ENCODE measurements at regions of chr6 and their contacts with region 1.

Region 1: DNA sequence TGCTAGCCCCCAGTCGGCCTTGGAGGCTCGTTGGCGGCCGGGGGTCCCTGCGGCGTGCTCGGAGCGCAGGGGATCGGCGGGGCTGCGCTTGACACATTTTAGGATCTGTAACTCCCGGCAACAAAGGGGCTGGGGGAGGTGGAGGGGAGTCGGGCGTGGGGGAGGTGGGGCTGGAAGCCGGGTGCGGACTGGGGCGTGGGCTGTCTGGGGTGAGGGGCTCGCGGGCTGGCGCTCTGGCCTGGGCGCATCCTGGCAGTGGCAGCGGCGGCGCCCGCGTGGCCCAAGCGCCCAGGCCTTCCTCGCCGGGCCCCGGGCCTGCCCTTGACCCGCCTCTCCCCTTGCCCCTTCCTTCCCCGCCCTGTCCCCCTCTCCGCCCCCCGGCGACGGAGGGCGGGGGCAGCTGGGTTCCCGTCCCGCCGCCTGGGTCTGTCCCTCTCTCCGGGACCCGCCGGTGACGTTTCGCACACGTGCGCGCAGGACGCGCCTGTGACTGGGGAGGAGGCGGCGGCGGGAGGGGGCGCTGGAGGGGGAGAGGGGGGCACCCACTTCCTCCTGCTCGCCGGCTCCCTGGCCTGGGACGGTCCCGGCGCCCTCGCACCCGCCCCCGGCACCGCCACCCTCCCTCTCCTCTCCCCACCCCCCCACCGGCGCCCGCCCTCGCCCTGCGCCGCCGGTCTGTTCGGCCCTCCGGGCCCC is 1.5 kb downstream of the E2F3 start:
- DNase-seq: peak; percentile 84
- CTCF ChIP-seq: no peak

Region 2: DNA sequence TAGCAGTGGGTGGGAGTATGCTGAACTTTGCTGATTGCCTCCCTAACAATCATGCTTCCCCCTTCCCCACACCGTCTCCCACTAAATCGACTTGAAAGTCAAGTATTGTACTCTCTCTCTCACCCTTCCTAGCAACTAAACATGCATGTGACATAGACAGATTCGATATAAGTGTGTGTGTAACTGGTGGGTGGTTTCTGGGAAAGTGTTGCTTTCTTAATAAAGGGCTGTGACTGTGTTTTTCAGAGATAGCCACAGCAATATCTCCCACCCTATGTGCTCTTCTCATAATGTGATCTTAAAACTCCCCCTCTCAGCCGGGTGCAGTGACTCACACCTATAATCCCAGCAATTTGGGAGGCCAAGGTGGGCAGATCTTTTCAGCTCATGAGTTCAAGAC is 50.9 kb before region 1 on chr6:
- CTCF ChIA-PET with region 1: no interaction called
- POLR2A ChIA-PET with region 1: no interaction called
- DNase-seq: no peak
- CTCF ChIP-seq: no peak

Region 3: DNA sequence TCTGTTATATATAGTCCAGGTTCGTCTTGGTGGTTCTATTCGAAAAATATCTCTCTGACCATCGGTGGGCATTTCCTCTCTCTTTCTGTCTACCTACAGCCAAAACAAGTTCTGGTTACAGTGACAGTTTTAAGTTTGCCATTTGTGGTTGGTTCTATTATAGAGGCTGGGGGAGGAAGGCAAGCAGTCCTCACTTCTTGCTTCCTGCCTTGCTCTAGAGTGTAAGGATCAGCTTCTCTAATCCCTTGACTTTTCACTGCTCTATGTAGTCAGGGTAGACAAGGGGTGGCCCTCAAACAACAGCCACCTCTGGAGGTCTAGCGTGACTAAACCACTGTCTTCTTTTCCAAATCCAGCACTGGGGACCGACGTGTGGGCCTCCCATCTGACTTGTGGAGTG is 14.6 kb after region 1 on chr6:
- CTCF ChIA-PET with region 1: interaction called, 58 read pairs
- POLR2A ChIA-PET with region 1: no interaction called
- DNase-seq: peak; percentile 21
- CTCF ChIP-seq: no peak

Region 4: DNA sequence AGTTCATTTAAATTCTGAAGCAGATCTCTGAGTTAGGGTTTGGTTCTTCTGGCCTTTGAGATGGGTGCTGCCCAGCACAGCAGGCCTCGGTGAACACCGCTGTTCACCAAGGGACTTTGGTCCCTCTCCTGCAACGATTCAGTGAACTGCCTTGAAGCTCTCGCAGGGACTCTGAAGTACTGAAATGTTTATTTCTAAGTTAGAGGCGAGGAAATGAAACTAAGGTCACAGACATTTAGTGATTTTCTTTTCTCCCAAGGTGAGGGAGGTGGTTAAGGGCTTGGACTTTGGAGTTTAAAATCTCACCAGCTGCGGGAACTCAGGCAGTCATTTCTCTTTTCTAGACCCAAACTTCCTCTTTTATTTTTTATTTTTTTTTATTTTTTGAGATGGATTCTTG is 24.6 kb after region 1 on chr6:
- CTCF ChIA-PET with region 1: interaction called, 22 read pairs
- POLR2A ChIA-PET with region 1: no interaction called
- DNase-seq: peak; percentile 67
- CTCF ChIP-seq: no peak

Region 5: DNA sequence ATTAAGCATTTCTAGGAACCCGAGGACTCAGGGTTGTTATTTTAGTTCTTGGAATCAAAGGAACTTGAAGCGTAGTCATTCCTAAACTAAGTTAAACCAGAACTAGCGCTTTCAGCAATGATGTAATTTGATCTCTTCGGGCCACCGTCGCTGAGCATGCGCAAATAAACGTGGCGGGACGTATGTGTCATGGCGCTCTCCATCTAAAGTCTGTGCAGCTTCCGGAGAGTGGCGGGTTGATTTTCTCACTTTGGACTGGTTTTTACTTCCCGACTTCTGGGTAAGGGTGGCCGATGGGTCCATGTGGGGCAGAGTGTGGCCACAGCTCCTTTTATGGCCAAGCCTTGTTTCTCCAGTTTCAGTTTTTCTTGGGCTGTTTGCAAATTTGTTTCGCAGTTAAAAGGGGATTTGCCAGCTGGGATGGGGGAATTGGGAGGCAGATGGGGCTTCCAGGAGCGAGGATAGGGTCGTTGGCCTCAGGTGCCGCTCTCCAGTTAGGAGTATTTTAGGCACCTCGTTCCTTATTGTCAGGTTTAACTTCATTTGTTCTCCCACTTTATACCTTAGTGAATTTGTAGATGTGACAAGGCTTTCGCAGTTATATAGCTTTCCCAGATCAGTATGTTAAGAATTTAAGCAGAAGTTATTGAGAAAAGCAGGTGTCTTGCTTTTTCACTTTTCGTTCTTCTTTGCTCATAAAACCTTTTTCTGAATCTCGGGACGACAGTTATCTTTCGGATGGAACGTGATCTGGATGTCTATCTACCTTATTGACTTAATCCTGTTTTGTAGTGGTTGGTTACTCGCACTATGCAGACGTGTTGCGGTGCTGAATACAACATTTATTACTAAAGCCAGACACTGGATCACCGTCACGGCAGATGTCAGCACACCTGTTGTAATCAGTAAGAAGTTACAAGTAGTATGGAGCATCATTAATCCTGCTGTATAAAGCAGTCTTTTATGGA is 131.4 kb after region 1 on chr6 and contains the start of gene CDKAL1:
- CTCF ChIA-PET with region 1: interaction called, 13 read pairs
- POLR2A ChIA-PET with region 1: no interaction called
- DNase-seq: peak; percentile 75
- CTCF ChIP-seq: no peak

Measured in GM10248 (cell line).